ENCODE measurements at regions of chr6 and their contacts with region 1.

Region 1: DNA sequence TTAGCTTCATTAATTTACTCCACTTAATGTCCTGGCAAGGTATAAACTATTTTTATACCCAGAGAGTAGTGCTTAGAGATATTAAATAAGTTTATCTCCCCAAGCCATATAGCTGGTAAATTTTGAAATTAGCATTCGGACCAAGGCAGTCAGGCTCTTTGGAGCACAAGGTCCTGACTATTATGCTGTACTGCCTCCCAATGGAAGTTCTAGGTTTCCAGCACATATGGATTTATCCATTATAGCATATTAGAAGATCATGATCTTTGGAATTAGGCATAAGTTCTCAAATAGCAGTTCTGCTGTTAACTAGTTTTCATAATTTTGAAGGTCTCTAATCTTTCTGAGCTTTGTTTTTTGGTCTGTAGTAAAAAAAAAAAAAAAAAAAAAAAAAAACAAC is 835.3 kb upstream of the EPHA7 start:
- DNase-seq: no peak
- H3K4me3 ChIP-seq: no peak overlapping the region
- H3K27ac ChIP-seq: no peak overlapping the region
- H3K4me1 ChIP-seq: no peaks in the 10 kb centered on the region
- H3K27me3 ChIP-seq: no peaks in the 10 kb centered on the region
- CTCF ChIP-seq: no peak
- POLR2A ChIP-seq: no peak

Region 2: DNA sequence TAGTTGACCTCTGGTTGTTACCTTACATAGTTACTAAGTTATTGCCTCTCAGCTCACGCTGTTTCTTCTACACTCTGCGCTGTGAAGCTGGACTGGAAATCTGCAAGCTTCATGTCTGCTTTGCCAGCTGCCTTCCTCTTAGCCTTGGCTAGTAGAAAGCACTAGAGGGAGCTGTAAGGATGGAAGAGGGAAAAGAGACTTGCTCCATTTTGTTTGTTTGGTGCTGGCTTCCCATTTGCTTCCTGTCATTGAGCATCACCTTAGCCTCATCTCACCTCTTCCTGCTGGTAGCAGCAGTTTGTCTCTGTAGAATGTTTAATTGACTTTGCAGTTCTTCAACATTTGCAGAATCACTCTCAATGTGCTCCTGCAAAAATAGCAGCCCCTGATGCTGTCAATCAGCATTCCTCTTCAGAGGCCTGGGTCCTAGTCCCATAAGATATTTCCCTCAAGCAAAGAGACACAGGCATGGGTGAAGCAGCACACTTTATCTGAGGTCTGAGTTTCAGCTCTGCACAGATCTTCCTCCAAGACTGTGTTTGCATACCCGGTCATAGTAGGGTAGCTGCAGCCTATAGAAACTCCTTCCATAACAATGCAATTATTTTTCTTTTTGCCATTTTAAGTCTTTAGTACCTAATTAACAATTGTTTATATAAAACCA is 533.2 kb before region 1 on chr6:
- CTCF ChIA-PET with region 1: no interaction called
- POLR2A ChIA-PET with region 1: no interaction called
- dilution Hi-C with region 1: no loop called
- intact Hi-C with region 1: loop called (anchors 5 kb)
- DNase-seq: peak; percentile 2
- H3K4me3 ChIP-seq: no peak overlapping the region
- H3K27ac ChIP-seq: no peak overlapping the region
- H3K4me1 ChIP-seq: no peaks in the 10 kb centered on the region
- H3K27me3 ChIP-seq: no peaks in the 10 kb centered on the region
- CTCF ChIP-seq: peak; percentile 11 to 12
- POLR2A ChIP-seq: no peak

Region 3: DNA sequence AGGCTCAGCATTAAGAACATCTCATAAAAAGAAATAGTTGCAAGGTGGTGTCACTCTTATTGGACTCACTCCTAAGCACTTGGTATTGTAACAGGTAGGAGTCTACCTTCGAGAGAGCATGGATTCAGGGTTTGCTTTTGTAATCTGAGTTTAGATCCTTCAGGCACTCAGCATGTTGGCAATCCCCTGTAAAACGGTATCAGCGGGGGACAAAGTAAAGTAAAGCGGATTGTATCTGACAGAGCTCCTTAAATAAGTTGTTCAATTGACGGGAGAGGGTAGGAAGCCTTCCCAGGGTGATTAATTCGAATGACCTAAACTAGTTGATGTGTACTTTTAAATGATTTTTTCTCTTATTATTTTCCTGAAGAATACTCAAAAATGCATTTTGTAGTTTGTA is 34.4 kb after region 1 on chr6:
- CTCF ChIA-PET with region 1: no interaction called
- POLR2A ChIA-PET with region 1: no interaction called
- dilution Hi-C with region 1: no loop called
- intact Hi-C with region 1: no loop called
- DNase-seq: no peak
- H3K4me3 ChIP-seq: no peak overlapping the region
- H3K27ac ChIP-seq: no peak overlapping the region
- H3K4me1 ChIP-seq: no peaks in the 10 kb centered on the region
- H3K27me3 ChIP-seq: no peaks in the 10 kb centered on the region
- CTCF ChIP-seq: no peak
- POLR2A ChIP-seq: no peak